A673 (cell line): ENCODE measurements at regions of chr1 and their contacts with region 1.

Region 1: DNA sequence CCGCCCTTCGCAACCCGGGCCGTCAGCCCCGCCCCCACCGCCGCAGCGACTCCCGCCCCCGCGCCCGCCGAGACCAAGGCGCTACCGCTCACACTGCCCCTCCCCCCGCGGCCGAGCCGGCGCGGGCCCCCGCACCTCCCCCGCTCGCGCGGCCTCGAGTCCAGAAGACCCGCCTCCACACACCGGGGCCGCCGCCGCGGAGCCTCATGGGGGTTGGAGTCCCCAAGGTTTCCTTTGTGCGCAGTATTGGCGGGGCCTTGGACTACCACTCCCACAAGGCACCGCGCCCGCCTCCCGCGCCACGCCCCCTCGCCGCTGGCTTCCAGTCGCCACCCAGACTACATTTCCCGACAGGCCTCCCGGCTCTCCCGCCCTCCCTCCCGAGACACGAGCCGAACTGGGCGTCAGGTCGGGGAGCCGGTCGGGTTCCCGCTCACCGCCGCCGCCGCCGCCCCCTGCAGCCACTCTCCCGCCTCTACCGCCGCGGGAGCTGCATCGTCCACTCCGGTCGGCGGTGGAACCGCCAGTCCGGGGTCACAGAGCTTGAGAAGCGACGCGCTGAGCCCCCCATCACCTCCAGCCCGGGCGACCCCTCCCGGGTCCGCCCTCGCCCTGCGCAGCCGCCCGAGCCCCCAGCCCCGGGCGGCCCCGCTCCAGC is at the start of gene PHF13:
- DNase-seq: peak; percentile 99
- H3K4me3 ChIP-seq: peak within 1 kb of the TSS; percentile 99
- H3K27ac ChIP-seq: peak within 1 kb of the TSS; percentile 92
- H3K4me1 ChIP-seq: peaks cover 5% of the 10 kb centered on the region
- H3K27me3 ChIP-seq: no peaks in the 10 kb centered on the region
- CTCF ChIP-seq: no peak
- total RNA-seq, gene PHF13: 37.8 and 44.2 TPM in 2 replicates

Region 2: DNA sequence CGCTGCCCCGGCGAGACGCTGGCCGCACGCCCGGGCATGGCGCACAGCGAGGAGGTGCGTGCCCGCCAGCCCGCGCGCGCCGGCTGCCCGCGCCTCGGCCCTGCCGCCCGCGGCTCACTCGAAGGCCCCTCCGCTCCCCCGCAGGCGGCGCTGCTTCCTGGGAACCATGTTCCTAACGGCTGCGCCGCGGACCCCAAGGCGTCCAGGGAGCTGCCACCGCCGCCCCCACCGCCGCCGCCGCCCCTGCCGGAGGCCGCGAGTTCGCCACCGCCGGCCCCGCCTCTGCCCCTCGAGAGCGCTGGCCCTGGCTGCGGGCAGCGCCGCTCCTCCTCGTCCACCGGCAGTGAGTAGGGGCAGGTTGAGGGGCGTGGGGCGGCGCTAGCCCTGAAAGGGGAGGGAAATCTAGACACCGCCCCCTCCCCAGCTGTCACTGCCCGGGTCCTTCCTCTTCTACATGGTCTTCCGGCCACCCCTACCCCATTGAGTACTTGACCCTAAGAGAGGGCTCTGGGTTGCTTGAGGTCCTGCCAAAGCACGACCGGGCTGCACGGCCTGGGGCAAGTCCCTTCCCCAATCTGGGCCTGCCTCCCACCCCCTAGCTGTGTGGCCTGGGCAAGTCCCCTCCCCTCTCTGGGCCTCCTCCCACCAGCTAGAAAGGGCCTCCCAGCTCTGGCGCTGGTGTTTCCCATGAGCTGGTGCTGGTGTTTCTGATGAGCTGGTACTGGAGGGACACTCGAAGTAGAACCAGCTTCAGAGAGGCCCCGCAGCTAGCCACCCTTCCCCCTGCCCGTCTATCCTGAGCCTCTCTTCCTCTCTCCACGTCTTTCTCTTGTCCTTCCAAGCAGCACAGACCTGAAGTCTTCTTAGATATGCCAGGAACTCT is 164.5 kb before region 1 on chr1:
- CTCF ChIA-PET with region 1: no interaction called
- POLR2A ChIA-PET with region 1: no interaction called
- intact Hi-C with region 1: no loop called
- DNase-seq: peak; percentile 42
- H3K4me3 ChIP-seq: no peak overlapping the region
- H3K27ac ChIP-seq: no peak overlapping the region
- H3K4me1 ChIP-seq: no peaks in the 10 kb centered on the region
- H3K27me3 ChIP-seq: peaks cover 76% of the 10 kb centered on the region
- CTCF ChIP-seq: no peak

Region 3: DNA sequence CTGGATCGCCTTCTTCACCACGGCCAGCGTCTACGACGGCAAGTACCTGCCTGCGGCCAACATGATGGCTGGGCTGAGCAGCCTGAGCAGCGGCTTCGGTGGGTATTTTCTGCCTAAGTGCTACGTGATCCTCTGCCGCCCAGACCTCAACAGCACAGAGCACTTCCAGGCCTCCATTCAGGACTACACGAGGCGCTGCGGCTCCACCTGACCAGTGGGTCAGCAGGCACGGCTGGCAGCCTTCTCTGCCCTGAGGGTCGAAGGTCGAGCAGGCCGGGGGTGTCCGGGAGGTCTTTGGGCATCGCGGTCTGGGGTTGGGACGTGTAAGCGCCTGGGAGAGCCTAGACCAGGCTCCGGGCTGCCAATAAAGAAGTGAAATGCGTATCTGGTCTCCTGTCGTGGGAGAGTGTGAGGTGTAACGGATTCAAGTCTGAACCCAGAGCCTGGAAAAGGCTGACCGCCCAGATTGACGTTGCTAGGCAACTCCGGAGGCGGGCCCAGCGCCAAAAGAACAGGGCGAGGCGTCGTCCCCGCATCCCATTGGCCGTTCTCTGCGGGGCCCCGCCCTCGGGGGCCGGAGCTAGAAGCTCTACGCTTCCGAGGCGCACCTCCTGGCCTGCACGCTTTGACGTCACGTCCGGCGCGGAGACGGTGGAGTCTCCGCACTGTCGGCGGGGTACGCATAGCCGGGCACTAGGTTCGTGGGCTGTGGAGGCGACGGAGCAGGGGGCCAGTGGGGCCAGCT is 33.9 kb before region 1 on chr1 and contains the start of gene ZBTB48:
- CTCF ChIA-PET with region 1: no interaction called
- POLR2A ChIA-PET with region 1: no interaction called
- intact Hi-C with region 1: no loop called
- DNase-seq: peak; percentile 99
- H3K4me3 ChIP-seq: peak within 1 kb of the TSS; percentile 89
- H3K27ac ChIP-seq: peak within 1 kb of the TSS; percentile 85
- H3K4me1 ChIP-seq: peaks cover 14% of the 10 kb centered on the region
- H3K27me3 ChIP-seq: no peaks in the 10 kb centered on the region
- CTCF ChIP-seq: no peak
- total RNA-seq, gene ZBTB48: 29.9 and 35.3 TPM in 2 replicates

Region 4: GRCh38 chr1:6602669-6603237 is 10.7 kb before region 1 on chr1 and contains the start of gene KLHL21:
- CTCF ChIA-PET with region 1: no interaction called
- POLR2A ChIA-PET with region 1: no interaction called
- intact Hi-C with region 1: loop called (anchors 1 kb)
- DNase-seq: peak; percentile 93
- H3K4me3 ChIP-seq: peak within 1 kb of the TSS; percentile 89
- H3K27ac ChIP-seq: peak within 1 kb of the TSS; percentile 83
- H3K4me1 ChIP-seq: peaks cover 11% of the 10 kb centered on the region
- H3K27me3 ChIP-seq: no peaks in the 10 kb centered on the region
- CTCF ChIP-seq: no peak
- total RNA-seq, gene KLHL21: 29.4 and 38.0 TPM in 2 replicates

Region 5: GRCh38 chr1:6753320-6754140 is 140.0 kb after region 1 on chr1:
- CTCF ChIA-PET with region 1: no interaction called
- POLR2A ChIA-PET with region 1: no interaction called
- intact Hi-C with region 1: no loop called
- DNase-seq: no peak
- H3K4me3 ChIP-seq: no peak overlapping the region
- H3K27ac ChIP-seq: no peak overlapping the region
- H3K4me1 ChIP-seq: no peaks in the 10 kb centered on the region
- H3K27me3 ChIP-seq: peaks cover 52% of the 10 kb centered on the region
- CTCF ChIP-seq: no peak

Region 6: GRCh38 chr1:6832531-6833188 is 219.2 kb after region 1 on chr1:
- CTCF ChIA-PET with region 1: no interaction called
- POLR2A ChIA-PET with region 1: no interaction called
- intact Hi-C with region 1: no loop called
- DNase-seq: no peak
- H3K4me3 ChIP-seq: no peak overlapping the region
- H3K27ac ChIP-seq: no peak overlapping the region
- H3K4me1 ChIP-seq: peaks cover 3% of the 10 kb centered on the region
- H3K27me3 ChIP-seq: no peaks in the 10 kb centered on the region
- CTCF ChIP-seq: no peak